Heart right ventricle (tissue), 16 donors: ENCODE measurements at regions of chr1 and their contacts with region 1.

Region 1: GRCh38 chr1:76891931-76892622 is 24.8 kb downstream of the ST6GALNAC5 start:
- DNase-seq: no peak
- ATAC-seq: no peak
- H3K4me3 ChIP-seq: no peak overlapping the region
- H3K27ac ChIP-seq: no peak overlapping the region
- H3K4me1 ChIP-seq: no peaks in the 10 kb centered on the region
- H3K27me3 ChIP-seq: peaks cover 0 to 4% (median 0%) of the 10 kb centered on the region in 7 donors
- CTCF ChIP-seq: no peak

Region 2: DNA sequence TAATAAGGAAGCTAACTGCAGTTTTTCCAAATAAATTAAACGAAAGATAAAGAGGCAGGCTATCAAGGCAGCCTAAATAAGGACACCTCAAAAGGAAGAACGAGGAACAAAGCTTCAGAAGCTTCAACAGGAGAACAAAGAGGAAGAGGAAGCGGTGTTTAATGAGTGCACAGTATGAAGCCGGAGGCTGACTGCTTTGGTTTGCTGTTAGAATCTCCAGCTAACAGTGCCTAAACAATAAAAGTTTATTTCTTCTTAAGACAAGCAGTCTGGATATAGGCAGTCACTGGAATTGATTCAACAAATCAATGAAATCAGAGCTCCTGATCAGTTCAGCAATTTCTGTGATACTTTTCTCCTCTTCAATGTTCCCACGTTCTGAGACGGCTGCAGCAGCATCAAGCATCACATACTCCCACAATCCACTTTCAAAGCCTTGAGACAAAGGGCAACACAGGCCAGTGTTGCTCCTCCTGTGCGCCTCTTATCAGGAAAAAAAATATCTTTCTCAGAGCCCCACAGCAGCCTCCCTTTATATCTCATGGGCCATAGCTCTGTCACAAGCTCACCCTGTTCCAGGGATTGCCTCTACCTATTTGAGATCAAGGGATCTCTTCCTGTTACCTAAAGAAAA is 390.4 kb before region 1 on chr1:
- intact Hi-C with region 1: no loop called
- DNase-seq: no peak
- ATAC-seq: no peak
- H3K4me3 ChIP-seq: no peak overlapping the region
- H3K27ac ChIP-seq: no peak overlapping the region
- H3K4me1 ChIP-seq: peaks cover 0 to 10% (median 3%) of the 10 kb centered on the region in 9 donors
- H3K27me3 ChIP-seq: no peaks in the 10 kb centered on the region
- CTCF ChIP-seq: no peak

Region 3: DNA sequence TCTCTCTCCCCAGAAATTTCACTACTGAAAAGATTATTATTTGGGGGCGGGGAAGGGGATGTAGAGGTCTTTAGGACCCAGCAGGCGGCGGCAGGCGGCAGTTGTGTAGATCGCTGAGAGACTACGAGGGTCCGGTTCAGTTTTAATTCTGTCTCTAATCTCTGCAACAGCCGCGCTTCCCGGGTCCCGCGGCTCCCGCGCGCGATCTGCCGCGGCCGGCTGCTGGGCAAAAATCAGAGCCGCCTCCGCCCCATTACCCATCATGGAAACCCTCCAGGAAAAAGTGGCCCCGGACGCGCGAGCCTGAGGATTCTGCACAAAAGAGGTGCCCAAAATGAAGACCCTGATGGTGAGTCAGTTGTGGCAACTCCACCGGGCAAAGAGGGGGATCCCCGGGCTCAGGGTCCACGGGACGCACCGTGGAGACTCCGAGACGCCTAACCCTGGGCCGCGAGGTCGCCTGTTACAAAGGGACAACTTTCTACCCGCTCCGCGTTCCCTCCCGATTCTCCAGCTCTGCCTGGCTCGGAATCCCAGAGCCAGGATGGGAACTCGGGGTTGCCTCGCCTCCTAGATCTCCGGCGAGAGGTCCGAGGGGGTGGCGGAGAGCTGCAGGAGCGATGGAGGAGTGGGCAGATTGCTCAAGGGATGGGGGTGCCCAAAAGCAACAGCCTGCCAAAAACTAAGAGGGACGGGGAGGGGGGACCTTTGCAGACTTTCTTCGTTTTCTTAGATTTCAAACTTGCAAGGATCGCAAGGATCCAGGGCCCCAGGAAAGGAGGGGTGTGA is 24.5 kb before region 1 on chr1 and contains the start of gene ST6GALNAC5:
- intact Hi-C with region 1: loop called in 1 of 10 experiments (anchors 1 kb)
- DNase-seq: no peak
- ATAC-seq: peak in 5 of 8 donors; percentile 37 to 74 (median 61)
- H3K4me3 ChIP-seq: peak within 1 kb of the TSS; percentile 11 to 58 (median 42)
- H3K27ac ChIP-seq: no peak within 1 kb of the TSS
- H3K4me1 ChIP-seq: peaks cover 0 to 25% (median 20%) of the 10 kb centered on the region in 9 donors
- H3K27me3 ChIP-seq: peaks cover 0 to 91% (median 84%) of the 10 kb centered on the region in 7 donors
- CTCF ChIP-seq: no peak
- total RNA-seq, gene ST6GALNAC5: 0.17 to 1.3 (median 0.31) TPM in 8 of 10 donors, not detected in the others